Activated CD8-positive, alpha-beta T cell treated with anti-CD3 and anti-CD28 coated beads, Interleukin-2, amount 10 ng/mL, durations not matched to agents 7 days and 5 days (primary cell): ENCODE measurements at regions of chr17 and their contacts with region 1.

Region 1: DNA sequence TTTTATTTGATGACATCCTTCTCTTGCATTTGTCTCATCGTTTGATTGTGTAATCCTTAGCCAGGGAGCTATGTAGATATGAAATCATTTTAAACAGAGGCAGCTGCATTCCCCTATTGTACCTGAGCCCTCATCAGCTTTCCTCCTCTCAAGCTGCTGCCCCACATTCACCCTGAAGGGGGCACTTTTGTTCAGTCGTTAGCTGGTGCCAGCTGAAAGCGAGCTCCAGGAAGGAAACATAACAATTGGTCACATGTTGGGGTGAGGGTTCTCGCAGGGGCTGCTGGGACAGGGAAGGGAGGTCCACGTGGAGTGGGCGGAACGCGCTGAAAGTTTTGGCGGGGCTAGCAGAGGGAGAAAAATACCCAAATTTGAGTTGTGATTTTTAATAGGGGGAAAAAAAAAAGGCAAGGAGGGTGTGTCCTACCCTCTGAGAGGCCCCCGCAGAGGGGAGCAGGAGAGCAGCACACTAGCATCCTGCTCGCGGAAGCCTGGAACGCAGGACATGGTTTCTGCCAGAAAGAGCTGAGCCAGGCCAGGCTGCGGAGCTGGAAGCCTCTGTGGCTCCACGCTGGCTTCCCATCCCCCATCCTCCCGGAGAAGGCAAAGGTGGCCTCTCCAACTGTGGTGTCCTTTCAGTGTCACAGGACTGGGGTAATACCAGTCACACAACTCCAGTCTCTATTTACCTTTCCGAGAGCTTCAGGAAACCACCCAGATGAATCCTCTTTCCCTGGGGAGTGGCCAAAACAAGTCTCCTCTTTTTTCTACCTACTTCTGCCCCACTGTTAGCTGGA is 8.5 kb upstream of the MSL1 start:
- DNase-seq: peak; percentile 97
- ATAC-seq: peak; percentile 90
- H3K4me3 Mint-ChIP-seq: peak overlapping the region; percentile 85
- H3K27ac Mint-ChIP-seq: peak overlapping the region; percentile 91
- H3K4me1 Mint-ChIP-seq: peaks cover 65% of the 10 kb centered on the region
- H3K27me3 Mint-ChIP-seq: no peaks in the 10 kb centered on the region

Region 2: DNA sequence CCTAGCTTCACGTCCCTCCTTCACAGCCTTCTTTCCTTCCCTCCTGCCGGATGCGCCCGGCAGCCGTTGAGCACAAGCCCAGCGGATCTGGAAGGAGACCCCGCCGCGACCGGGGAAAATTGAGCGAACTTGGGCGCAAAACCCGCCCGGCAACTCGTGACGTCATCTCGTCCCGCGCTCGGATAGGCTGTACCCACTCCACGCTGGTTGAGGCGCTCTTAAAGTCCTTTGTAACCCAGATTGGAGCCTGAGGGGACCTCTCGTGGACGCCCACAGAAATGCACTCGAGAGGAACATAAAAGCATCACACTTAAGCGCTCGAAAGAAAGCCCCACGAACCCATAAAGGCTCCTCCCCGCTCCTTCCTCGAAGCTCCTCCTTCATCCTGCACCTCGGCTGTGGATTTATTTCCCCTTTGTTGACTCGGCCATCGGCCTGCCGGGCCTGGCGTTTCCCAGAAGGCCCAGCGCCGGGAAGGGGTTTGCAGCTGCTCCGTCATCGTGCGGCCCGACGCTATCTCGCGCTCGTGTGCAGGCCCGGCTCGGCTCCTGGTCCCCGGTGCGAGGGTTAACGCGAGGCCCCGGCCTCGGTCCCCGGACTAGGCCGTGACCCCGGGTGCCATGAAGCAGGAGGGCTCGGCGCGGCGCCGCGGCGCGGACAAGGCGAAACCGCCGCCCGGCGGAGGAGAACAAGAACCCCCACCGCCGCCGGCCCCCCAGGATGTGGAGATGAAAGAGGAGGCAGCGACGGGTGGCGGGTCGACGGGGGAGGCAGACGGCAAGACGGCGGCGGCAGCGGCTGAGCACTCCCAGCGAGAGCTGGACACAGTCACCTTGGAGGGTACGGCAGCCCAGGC is 132.7 kb before region 1 on chr17 and contains the start of gene PSMD3:
- CTCF ChIA-PET with region 1: interaction called, 11 read pairs
- POLR2A ChIA-PET with region 1: no interaction called
- DNase-seq: peak; percentile 99
- ATAC-seq: peak; percentile 98
- H3K4me3 Mint-ChIP-seq: peak within 1 kb of the TSS; percentile 92
- H3K27ac Mint-ChIP-seq: peak within 1 kb of the TSS; percentile 92
- H3K4me1 Mint-ChIP-seq: peaks cover 31% of the 10 kb centered on the region
- H3K27me3 Mint-ChIP-seq: peaks cover 10% of the 10 kb centered on the region
- total RNA-seq, gene PSMD3: 104 to 116 TPM

Region 3: DNA sequence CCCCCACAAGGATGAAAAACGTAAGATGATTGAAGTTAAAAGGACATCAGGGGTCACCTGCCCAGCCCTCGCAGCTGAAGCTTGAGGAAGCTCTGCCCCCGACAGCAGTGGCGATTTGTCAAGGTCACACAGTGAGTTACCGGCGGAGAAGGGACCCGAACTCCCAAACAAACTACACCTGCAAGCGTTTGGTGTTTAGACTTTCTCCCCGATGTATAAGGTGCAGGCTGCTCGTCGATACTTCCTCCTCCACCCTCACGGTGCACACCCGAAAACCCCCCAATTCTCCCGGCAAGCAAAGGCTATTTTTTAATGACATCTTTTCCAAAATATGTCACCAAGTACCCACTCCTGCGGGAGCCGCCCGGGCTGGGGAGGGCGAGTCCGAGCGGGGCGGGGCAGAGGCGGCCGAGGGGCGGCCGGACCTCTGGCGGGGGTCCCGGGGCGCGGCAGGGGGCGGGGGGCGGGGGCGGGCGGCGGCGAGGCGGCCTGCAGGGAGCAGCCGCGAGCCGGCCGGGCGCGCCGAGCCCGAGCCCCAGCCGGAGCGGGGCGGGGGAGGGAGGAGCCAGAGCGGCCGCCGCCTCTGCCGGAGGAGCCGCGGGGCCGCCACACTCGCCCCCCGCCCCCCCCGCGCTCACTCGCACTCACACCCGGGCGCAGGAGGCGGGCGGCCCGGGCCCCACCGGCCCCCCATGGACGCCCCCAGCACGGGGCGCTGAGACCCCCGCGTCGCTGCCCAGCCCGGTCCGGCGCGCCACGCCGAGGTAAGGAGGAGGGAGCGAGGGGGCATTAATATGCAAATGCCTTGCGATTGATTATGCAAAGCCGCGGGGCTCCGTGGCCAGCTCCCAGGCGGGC is 50.8 kb before region 1 on chr17 and contains the start of gene THRA:
- CTCF ChIA-PET with region 1: interaction called, 93 read pairs
- POLR2A ChIA-PET with region 1: no interaction called
- DNase-seq: peak; percentile 70
- ATAC-seq: peak; percentile 93
- H3K4me3 Mint-ChIP-seq: peak within 1 kb of the TSS; percentile 80
- H3K27ac Mint-ChIP-seq: peak within 1 kb of the TSS; percentile 46
- H3K4me1 Mint-ChIP-seq: peaks cover 36% of the 10 kb centered on the region
- H3K27me3 Mint-ChIP-seq: peaks cover 29% of the 10 kb centered on the region
- total RNA-seq, gene THRA: 8.7 to 9.7 TPM

Region 4: GRCh38 chr17:40091691-40092397 is 21.5 kb before region 1 on chr17:
- CTCF ChIA-PET with region 1: interaction called, 156 read pairs
- POLR2A ChIA-PET with region 1: interaction called, 3 read pairs
- DNase-seq: no peak
- ATAC-seq: no peak
- H3K4me3 Mint-ChIP-seq: no peak overlapping the region
- H3K27ac Mint-ChIP-seq: no peak overlapping the region
- H3K4me1 Mint-ChIP-seq: peaks cover 31% of the 10 kb centered on the region
- H3K27me3 Mint-ChIP-seq: no peaks in the 10 kb centered on the region

Region 5: GRCh38 chr17:40139566-40140058 is 26.3 kb after region 1 on chr17:
- CTCF ChIA-PET with region 1: interaction called, 25 read pairs
- POLR2A ChIA-PET with region 1: interaction called, 11 read pairs
- DNase-seq: no peak
- ATAC-seq: no peak
- H3K4me3 Mint-ChIP-seq: peak overlapping the region; percentile 87
- H3K27ac Mint-ChIP-seq: peak overlapping the region; percentile 94
- H3K4me1 Mint-ChIP-seq: peaks cover 36% of the 10 kb centered on the region
- H3K27me3 Mint-ChIP-seq: no peaks in the 10 kb centered on the region

Region 6: GRCh38 chr17:40168262-40168832 is 55.0 kb after region 1 on chr17:
- CTCF ChIA-PET with region 1: interaction called, 182 read pairs
- POLR2A ChIA-PET with region 1: interaction called, 7 read pairs
- DNase-seq: peak; percentile 48
- ATAC-seq: peak; percentile 60
- H3K4me3 Mint-ChIP-seq: no peak overlapping the region
- H3K27ac Mint-ChIP-seq: peak overlapping the region; percentile 47
- H3K4me1 Mint-ChIP-seq: peaks cover 6% of the 10 kb centered on the region
- H3K27me3 Mint-ChIP-seq: no peaks in the 10 kb centered on the region

Region 7: GRCh38 chr17:40219073-40219860 is 106.0 kb after region 1 on chr17 and contains the start of gene WIPF2:
- CTCF ChIA-PET with region 1: interaction called, 26 read pairs
- POLR2A ChIA-PET with region 1: no interaction called
- DNase-seq: peak; percentile 98
- ATAC-seq: peak; percentile 95
- H3K4me3 Mint-ChIP-seq: peak within 1 kb of the TSS; percentile 82
- H3K27ac Mint-ChIP-seq: peak within 1 kb of the TSS; percentile 99
- H3K4me1 Mint-ChIP-seq: peaks cover 22% of the 10 kb centered on the region
- H3K27me3 Mint-ChIP-seq: no peaks in the 10 kb centered on the region
- total RNA-seq, gene WIPF2: 22.0 to 27.4 TPM

Region 8: GRCh38 chr17:40818733-40819527 is 705.6 kb after region 1 on chr17:
- CTCF ChIA-PET with region 1: no interaction called
- POLR2A ChIA-PET with region 1: no interaction called
- DNase-seq: peak; percentile 87
- ATAC-seq: peak; percentile 85
- H3K4me3 Mint-ChIP-seq: peak overlapping the region; percentile 82
- H3K27ac Mint-ChIP-seq: peak overlapping the region; percentile 94
- H3K4me1 Mint-ChIP-seq: peaks cover 27% of the 10 kb centered on the region
- H3K27me3 Mint-ChIP-seq: peaks cover 6% of the 10 kb centered on the region